ENCODE measurements at regions of chr1 and their contacts with region 1.

Region 1: GRCh38 chr1:39538588-39539465 is 37.8 kb downstream of the PABPC4 start:
- DNase-seq: peak in 11 of 14 experiments; percentile 7 to 72 (median 26)
- ATAC-seq: peak; percentile 69
- H3K4me3 ChIP-seq: no peak overlapping the region
- H3K4me3 Mint-ChIP-seq: no peak overlapping the region
- H3K27ac ChIP-seq: no peak overlapping the region
- H3K27ac Mint-ChIP-seq: no peak overlapping the region
- H3K4me1 ChIP-seq: no peaks in the 10 kb centered on the region
- H3K4me1 Mint-ChIP-seq: no peaks in the 10 kb centered on the region
- H3K27me3 ChIP-seq: no peaks in the 10 kb centered on the region
- H3K27me3 Mint-ChIP-seq: no peaks in the 10 kb centered on the region
- CTCF ChIP-seq: peak; percentile 76

Region 2: GRCh38 chr1:39282537-39283216 is 256.1 kb before region 1 on chr1:
- CTCF ChIA-PET with region 1: no interaction called
- POLR2A ChIA-PET with region 1: no interaction called
- intact Hi-C with region 1: loop called in 1 of 2 experiments (anchors 10 kb)
- DNase-seq: no peak
- ATAC-seq: no peak
- H3K4me3 ChIP-seq: no peak overlapping the region
- H3K4me3 Mint-ChIP-seq: no peak overlapping the region
- H3K27ac ChIP-seq: no peak overlapping the region
- H3K27ac Mint-ChIP-seq: peak overlapping the region; percentile 76
- H3K4me1 ChIP-seq: no peaks in the 10 kb centered on the region
- H3K4me1 Mint-ChIP-seq: peaks cover 19% of the 10 kb centered on the region
- H3K27me3 ChIP-seq: no peaks in the 10 kb centered on the region
- H3K27me3 Mint-ChIP-seq: no peaks in the 10 kb centered on the region
- CTCF ChIP-seq: no peak

Region 3: GRCh38 chr1:39639305-39640130 is 100.7 kb after region 1 on chr1 and contains the start of gene HEYL:
- CTCF ChIA-PET with region 1: no interaction called
- POLR2A ChIA-PET with region 1: no interaction called
- intact Hi-C with region 1: no loop called
- DNase-seq: peak; percentile 19 to 78 (median 62)
- ATAC-seq: peak; percentile 91
- H3K4me3 ChIP-seq: peak within 1 kb of the TSS; percentile 25
- H3K4me3 Mint-ChIP-seq: peak within 1 kb of the TSS; percentile 61
- H3K27ac ChIP-seq: no peak within 1 kb of the TSS
- H3K27ac Mint-ChIP-seq: no peak within 1 kb of the TSS
- H3K4me1 ChIP-seq: peaks cover 6% of the 10 kb centered on the region
- H3K4me1 Mint-ChIP-seq: no peaks in the 10 kb centered on the region
- H3K27me3 ChIP-seq: peaks cover 11 to 22% of the 10 kb centered on the region in 2 experiments
- H3K27me3 Mint-ChIP-seq: peaks cover 43% of the 10 kb centered on the region
- CTCF ChIP-seq: no peak
- total RNA-seq, gene HEYL: 0.05 TPM in 1 of 2 experiments, not detected in the other

Measured in CD4-positive, alpha-beta T cell (primary cell).